ENCODE measurements at regions of chr1 and their contacts with region 1.

Region 1: DNA sequence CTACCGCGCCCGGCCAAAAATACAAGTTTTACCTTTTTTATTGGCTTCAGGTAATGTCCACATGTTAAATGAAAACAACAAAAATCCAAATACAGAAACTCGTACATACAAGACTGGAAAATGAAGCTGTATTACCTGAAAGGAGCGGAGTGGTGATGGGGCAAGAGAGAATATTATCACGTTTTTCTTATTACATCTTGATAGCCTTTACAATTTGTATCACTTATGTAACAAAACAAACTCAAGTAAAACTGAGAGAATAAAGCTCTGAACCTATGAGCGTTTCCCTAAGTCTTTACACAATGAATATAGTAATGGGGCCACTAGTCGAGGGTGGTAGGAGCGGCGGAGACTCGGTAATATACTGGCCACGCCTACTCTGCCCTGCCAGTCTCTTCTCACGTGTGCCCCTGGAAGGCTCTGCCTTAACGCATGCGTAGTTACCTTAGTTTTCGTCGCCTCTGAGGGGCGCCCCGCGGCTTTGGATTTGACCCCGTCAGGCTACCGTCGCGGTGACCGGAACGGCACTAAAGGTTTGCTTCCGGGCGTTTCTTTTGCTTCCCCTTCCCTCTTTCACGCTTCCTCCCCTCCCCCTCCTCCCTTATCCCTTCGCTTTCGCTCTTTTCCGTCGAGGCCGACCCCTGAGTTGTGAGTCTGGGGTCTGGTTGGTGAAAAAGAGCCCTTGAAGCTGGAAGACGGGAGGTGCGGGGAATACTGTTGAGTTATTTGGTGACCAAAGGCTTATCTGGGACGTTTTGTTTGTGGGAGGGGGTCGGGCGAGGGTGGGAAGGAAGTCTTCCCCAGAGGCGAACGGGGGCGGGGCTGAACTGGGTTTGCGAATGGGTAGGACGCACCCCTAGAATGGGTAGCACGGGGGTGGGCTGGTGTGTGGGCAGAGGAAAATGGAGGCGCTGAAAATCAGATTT is at the start of gene SETDB1:
- DNase-seq: peak; percentile 93
- H3K4me3 Mint-ChIP-seq: peak within 1 kb of the TSS; percentile 97
- H3K27ac Mint-ChIP-seq: peak within 1 kb of the TSS; percentile 98
- H3K4me1 Mint-ChIP-seq: peaks cover 20% of the 10 kb centered on the region
- H3K27me3 Mint-ChIP-seq: no peaks in the 10 kb centered on the region
- total RNA-seq, gene SETDB1: 60.9 and 61.1 TPM in 2 replicates

Region 2: DNA sequence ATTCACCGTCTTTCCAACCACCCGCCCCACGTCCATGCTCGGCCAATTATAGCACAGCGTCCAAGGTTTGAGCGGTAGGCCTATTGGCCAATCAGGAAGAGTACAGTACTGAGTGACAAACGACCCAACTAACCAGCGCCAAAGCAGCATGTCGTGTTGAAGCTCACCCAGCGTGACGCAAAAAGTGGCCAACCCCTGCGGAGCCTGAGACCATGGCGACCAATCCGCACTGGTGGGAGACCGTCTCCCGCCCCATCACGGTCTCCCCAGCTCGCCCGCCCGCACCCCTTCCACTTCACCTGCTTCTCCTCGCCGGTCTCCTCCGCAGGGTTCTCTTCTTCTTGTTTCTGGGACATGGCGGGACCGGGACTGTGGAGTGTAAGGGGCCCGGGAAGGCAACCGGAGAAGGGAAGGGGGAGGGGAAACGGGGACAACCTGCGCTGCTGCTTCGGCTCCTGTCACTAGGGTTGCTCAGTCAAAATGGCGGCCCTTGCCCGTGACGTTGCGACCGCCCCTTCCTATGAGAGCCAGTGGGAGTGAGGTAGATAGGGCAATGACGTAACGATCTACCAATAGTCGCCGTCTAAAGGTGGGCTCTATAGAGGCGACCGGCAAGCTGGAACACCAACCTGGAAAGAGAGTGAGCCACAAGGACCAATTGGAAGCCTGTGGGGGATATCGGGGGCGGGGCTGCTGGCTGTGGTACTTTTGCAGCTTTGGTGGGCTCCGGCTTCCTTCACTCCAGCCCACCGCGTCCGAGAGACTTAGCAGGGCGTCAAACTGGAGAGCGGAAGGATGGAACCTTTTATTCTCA is 296.8 kb before region 1 on chr1 and contains the start of gene ENSA:
- intact Hi-C with region 1: loop called (anchors 5 kb)
- DNase-seq: peak; percentile 96
- H3K4me3 Mint-ChIP-seq: no peak within 1 kb of the TSS
- H3K27ac Mint-ChIP-seq: no peak within 1 kb of the TSS
- H3K4me1 Mint-ChIP-seq: peaks cover 41% of the 10 kb centered on the region
- H3K27me3 Mint-ChIP-seq: no peaks in the 10 kb centered on the region
- total RNA-seq, gene ENSA: 252 and 253 TPM in 2 replicates

Region 3: DNA sequence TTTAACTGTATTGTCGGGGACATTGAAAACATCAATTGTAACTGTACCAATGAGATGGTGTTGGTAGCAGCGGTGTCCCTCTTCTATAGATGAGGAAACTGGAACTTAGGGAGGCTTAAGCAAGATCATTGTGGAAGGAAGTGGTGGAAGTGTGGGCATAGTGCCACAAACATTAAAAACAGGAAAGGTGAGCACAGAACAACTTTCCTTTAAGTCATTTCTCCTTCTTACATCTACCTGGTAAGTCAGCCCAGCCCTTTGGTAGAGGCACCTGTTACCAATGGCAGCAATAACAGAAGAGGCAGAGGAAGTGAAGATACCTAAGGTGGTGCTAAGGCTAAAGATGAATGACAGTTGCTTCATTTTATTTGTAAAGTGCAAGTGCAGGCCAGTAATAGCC is 148.5 kb before region 1 on chr1:
- intact Hi-C with region 1: no loop called
- DNase-seq: no peak
- H3K4me3 Mint-ChIP-seq: no peak overlapping the region
- H3K27ac Mint-ChIP-seq: no peak overlapping the region
- H3K4me1 Mint-ChIP-seq: peaks cover 12% of the 10 kb centered on the region
- H3K27me3 Mint-ChIP-seq: no peaks in the 10 kb centered on the region

Region 4: GRCh38 chr1:150789396-150789795 is 136.7 kb before region 1 on chr1:
- intact Hi-C with region 1: no loop called
- DNase-seq: no peak
- H3K4me3 Mint-ChIP-seq: no peak overlapping the region
- H3K27ac Mint-ChIP-seq: no peak overlapping the region
- H3K4me1 Mint-ChIP-seq: peaks cover 8% of the 10 kb centered on the region
- H3K27me3 Mint-ChIP-seq: peaks cover 7% of the 10 kb centered on the region

Region 5: GRCh38 chr1:150841626-150842025 is 84.5 kb before region 1 on chr1:
- intact Hi-C with region 1: loop called (anchors 1 kb)
- DNase-seq: no peak
- H3K4me3 Mint-ChIP-seq: no peak overlapping the region
- H3K27ac Mint-ChIP-seq: peak overlapping the region; percentile 72
- H3K4me1 Mint-ChIP-seq: peaks cover 33% of the 10 kb centered on the region
- H3K27me3 Mint-ChIP-seq: no peaks in the 10 kb centered on the region

Region 6: DNA sequence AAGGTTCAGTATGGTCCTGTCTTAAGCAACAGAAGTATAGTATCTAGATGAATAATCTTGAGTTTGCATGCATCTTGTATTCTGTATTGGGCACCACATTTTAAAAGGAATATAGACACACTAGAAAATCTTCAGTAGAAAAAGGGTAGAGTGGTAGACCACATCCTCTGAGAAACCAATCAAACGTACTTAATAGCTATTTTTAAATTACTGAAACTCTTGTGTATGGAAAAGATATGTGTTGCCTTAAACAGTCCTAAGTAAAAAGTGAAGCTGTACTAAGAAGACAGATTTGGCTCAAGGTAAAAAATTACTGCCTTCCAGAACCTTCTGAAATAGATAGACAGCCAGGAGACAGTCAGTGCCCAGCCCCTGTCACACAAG is 36.1 kb before region 1 on chr1:
- intact Hi-C with region 1: loop called (anchors 1 kb)
- DNase-seq: no peak
- H3K4me3 Mint-ChIP-seq: peak overlapping the region; percentile 60
- H3K27ac Mint-ChIP-seq: peak overlapping the region; percentile 64
- H3K4me1 Mint-ChIP-seq: peaks cover 34% of the 10 kb centered on the region
- H3K27me3 Mint-ChIP-seq: no peaks in the 10 kb centered on the region

Region 7: GRCh38 chr1:151156515-151156819 is 230.4 kb after region 1 on chr1 and contains the start of gene TNFAIP8L2:
- intact Hi-C with region 1: loop called (anchors 10 kb)
- DNase-seq: peak; percentile 71
- H3K4me3 Mint-ChIP-seq: peak within 1 kb of the TSS; percentile 99
- H3K27ac Mint-ChIP-seq: peak within 1 kb of the TSS; percentile 99
- H3K4me1 Mint-ChIP-seq: peaks cover 37% of the 10 kb centered on the region
- H3K27me3 Mint-ChIP-seq: no peaks in the 10 kb centered on the region
- total RNA-seq, gene TNFAIP8L2: 24.3 and 28.7 TPM in 2 replicates